ENCODE measurements at regions of chrX and their contacts with region 1.

Region 1: GRCh38 chrX:71227370-71228062 is 4.5 kb downstream of the GJB1 start:
- DNase-seq: peak; percentile 76
- ATAC-seq: peak; percentile 68
- H3K4me3 ChIP-seq: peak overlapping the region in 2 of 3 experiments; percentile 19 to 50; a peak in 3 of 6 replicates
- H3K27ac ChIP-seq: peak overlapping the region; percentile 100
- H3K4me1 ChIP-seq: peaks cover 92% of the 10 kb centered on the region
- H3K27me3 ChIP-seq: no peaks in the 10 kb centered on the region
- CTCF ChIP-seq: peak; percentile 39
- EP300 ChIP-seq: no peak
- POLR2A ChIP-seq: peak; percentile 58 to 64; a peak in 3 of 4 replicates
- RAD21 ChIP-seq: no peak

Region 2: GRCh38 chrX:71171110-71171801 is 56.3 kb before region 1 on chrX:
- CTCF ChIA-PET with region 1: no interaction called
- POLR2A ChIA-PET with region 1: no interaction called
- in situ Hi-C with region 1: no loop called
- intact Hi-C with region 1: no loop called
- DNase-seq: no peak
- ATAC-seq: peak; percentile 53; the same call in 2 of the 3 replicates
- H3K4me3 ChIP-seq: no peak overlapping the region
- H3K27ac ChIP-seq: no peak overlapping the region
- H3K4me1 ChIP-seq: peaks cover 32% of the 10 kb centered on the region; the same call in 1 of the 2 replicates
- H3K27me3 ChIP-seq: no peaks in the 10 kb centered on the region
- CTCF ChIP-seq: no peak
- EP300 ChIP-seq: no peak
- POLR2A ChIP-seq: no peak
- RAD21 ChIP-seq: no peak

Region 3: DNA sequence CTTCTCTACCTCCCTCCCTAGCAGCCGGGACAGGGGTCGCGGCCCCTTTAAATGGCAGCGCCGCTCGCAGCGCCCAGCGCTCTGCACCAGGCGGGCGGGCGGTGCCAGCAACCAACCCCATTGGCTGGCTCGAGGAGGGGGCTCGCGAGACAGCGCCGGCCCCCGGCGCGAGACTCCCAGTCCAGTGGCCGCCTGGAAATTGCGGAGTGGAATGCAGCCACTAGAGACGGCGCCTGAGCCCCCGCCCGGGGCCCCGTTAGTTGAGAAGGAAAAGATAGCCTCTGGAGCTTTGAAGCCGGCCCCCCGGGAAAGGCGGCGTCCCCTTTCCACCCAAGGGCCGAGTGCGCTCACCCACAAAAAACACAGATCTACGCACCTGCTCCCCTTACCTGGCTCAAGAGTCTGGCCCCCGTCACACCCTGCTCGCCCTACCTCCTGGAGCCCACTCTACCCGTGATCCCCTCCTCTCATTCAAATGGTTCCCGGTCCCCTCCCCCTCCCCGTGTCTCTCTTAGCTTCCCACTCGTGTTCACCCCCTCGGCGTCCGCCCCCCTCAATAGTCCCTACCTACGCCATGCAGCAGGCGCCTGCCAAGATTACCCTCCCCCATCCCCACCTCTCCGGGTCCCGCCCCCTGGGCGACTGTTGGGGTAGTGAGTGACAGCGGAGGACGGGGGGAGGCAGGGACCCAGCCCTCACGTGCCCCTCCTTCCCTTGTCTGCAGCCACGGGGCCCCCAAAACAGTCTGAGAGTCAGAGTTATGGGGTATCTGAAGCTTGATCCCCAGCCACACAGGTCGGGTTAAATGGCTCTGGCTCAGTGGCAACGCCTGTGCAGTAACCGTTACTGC is 26.8 kb after region 1 on chrX and contains the start of gene ZMYM3:
- CTCF ChIA-PET with region 1: no interaction called
- POLR2A ChIA-PET with region 1: interaction called, 13 read pairs
- in situ Hi-C with region 1: no loop called
- intact Hi-C with region 1: no loop called
- DNase-seq: peak; percentile 67
- ATAC-seq: peak; percentile 94
- H3K4me3 ChIP-seq: peak within 1 kb of the TSS; percentile 76 to 88 (median 83)
- H3K27ac ChIP-seq: peak within 1 kb of the TSS; percentile 78
- H3K4me1 ChIP-seq: peaks cover 35% of the 10 kb centered on the region
- H3K27me3 ChIP-seq: no peaks in the 10 kb centered on the region; a peak in 1 of 5 replicates
- CTCF ChIP-seq: no peak
- EP300 ChIP-seq: no peak
- POLR2A ChIP-seq: peak in 1 of 2 experiments; percentile 48; a peak in 1 of 4 replicates
- RAD21 ChIP-seq: no peak; the same call in 1 of the 2 replicates
- total RNA-seq, gene ZMYM3: 26.4 and 34.7 TPM in 2 replicates

Measured in HepG2 (cell line).